Posterior vena cava (tissue), 2 donors: ENCODE measurements at regions of chr10 and their contacts with region 1.

Region 1: DNA sequence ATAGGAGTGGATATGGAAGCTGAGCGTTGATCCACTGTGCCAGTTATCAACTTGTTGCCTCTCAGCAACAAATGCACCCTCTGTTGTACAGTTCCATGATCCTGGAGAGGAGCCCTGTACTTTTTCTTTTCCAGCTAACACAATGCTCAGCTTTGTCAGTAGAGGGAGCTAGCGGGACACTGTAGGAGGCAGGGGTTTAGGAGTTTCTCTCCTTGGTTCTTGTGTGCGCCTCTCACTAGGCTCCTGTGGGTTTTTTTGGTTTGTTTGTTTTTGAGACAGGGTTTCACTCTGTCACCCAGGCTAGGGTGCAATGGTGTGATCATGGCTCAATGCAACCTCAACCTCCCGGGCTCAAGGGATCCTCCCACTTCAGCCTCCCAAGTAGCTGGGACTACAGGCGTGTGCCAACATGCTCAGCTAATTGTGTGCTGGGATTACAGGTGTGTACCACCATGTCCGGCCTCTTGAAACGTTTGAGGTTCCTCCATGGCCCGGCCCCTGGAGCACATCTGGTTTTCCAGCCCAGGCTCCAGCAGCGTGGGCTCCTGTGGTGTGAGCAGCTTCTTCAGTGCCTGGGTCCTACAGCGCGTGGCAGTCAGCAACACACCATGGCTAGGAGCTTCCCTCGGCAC is 12.0 kb upstream of the MARVELD1 start:
- DNase-seq: no peak

Region 2: DNA sequence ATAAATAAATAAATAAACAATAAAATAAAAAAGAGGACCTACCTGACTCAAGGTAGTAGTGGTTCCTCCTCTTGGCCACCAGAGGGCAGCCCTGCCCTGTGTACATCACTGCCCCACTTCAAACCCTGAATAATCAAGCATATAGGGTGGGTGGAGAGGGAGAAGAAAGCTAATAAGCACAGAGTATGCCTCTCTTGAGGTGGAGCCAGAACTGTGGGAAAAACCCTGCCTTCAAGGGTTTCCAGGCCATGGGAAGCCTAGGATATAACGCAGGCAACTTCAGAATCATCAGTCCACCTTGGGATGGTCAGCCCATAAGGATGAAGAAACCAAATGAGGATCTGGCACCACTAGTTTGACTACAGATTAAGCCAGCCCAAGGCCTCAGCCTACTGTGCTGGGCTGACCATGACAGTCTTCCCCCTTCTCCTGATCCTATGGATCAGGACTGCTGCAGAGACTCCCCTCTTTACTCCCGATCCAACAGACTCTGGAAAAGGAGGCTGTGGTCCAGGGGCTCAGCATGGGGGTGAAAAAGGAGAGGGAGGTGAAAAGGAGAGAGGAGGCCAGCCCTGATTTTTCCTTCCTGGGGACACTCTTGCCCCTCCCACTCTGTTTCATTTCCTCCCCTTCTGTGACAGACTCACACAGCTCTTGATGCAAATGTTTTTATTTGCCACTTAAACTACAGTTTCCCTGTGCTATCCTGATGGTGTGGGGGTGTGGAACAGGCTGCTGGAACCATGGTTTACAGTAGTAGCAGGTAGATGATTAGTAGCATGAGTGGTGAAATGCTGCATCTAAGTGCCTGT is 24.6 kb before region 1 on chr10:
- intact Hi-C with region 1: loop called in 1 of 2 experiments (anchors 1 kb)
- DNase-seq: no peak

Region 3: GRCh38 chr10:97731346-97732051 is 29.9 kb after region 1 on chr10:
- intact Hi-C with region 1: loop called in 1 of 2 experiments (anchors 1 kb)
- DNase-seq: no peak

Region 4: DNA sequence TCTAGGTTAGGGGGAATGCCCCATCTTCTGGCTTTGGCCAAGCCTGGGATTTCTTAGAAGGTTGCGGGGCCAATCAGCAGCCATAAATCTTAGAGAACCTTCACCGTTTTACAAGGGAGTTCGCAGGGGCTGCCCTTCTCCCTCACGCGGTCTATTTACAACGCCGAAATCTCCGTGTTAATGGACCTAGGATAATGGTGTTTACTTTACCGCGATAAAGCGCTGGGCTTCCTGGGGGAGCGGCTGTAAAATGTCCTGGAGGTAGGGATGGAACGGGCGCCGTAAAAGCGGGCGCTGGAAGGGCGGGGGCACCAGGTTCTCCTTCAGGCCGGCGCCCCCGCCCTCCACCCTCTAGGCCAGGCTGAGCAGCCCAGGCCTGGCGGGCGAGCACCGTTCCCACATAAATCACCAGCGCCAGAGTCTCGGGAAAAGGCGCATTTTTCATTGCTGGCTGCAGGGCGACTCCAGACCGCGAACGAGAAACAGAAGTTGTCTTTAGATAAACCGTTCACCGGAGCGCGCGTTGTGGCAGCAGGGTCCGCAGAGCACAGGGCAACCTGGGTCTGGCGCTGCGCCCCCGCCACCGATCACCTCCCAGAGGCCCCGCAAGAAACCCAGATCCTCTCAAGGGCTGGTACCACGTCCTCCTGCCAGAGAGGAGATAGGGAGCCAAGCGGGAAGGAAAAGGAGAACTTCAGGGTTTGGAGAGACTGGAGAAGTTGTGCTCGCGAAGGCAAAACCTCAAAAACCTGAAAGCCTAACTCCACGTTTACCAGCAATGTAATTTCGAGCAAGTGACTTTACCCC is 1818.7 kb after region 1 on chr10:
- intact Hi-C with region 1: no loop called
- DNase-seq: no peak